ENCODE measurements at regions of chr10 and their contacts with region 1.

Region 1: DNA sequence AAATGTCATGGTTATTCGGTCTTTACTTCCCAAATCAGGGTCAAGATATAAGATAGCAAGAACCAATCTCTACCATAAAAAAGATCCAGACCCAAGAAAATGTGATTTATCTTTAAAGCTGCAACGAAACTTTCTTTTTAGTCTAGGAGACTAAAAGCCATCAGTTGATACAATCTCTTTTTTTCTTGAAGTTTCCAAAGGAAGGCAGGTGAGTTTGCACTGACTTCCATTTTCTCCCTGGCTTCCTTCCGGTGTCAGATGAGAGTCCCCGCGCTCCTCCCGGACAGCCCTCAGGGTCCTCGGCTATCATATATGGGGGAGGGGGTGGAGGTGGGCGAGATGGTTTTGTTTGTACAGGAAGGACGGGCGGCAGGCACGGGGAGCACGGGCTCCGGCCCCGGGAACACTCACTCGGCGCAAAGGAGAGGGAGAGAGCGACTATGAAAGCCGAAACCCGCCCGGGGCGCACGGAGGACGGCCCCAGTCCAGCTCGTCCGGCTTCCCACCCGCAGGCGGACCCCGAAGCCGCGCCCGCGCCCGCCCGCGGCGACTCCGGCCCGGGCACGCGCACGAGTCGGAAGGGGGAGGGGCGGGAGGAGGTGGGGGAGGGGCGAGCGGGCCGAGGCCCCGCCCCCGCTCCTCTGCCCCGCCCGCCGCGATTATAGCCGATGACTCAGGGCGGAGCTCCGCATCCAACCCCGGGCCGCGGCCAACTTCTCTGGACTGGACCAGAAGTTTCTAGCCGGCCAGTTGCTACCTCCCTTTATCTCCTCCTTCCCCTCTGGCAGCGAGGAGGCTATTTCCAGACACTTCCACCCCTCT is at the start of gene BAG3:
- DNase-seq: peak; percentile 80 to 88
- ATAC-seq: peak; percentile 79
- H3K4me3 ChIP-seq: peak within 1 kb of the TSS; percentile 88
- H3K27ac ChIP-seq: peak within 1 kb of the TSS; percentile 89 to 96
- H3K4me1 ChIP-seq: peaks cover 27% of the 10 kb centered on the region
- CTCF ChIP-seq: no peak
- EP300 ChIP-seq: no peak; a peak in 1 of 5 replicates
- POLR2A ChIP-seq: peak; percentile 66
- RAD21 ChIP-seq: no peak; a peak in 1 of 5 replicates
- polyA plus RNA-seq, gene BAG3: 10.7 and 18.3 TPM in 2 replicates

Region 2: DNA sequence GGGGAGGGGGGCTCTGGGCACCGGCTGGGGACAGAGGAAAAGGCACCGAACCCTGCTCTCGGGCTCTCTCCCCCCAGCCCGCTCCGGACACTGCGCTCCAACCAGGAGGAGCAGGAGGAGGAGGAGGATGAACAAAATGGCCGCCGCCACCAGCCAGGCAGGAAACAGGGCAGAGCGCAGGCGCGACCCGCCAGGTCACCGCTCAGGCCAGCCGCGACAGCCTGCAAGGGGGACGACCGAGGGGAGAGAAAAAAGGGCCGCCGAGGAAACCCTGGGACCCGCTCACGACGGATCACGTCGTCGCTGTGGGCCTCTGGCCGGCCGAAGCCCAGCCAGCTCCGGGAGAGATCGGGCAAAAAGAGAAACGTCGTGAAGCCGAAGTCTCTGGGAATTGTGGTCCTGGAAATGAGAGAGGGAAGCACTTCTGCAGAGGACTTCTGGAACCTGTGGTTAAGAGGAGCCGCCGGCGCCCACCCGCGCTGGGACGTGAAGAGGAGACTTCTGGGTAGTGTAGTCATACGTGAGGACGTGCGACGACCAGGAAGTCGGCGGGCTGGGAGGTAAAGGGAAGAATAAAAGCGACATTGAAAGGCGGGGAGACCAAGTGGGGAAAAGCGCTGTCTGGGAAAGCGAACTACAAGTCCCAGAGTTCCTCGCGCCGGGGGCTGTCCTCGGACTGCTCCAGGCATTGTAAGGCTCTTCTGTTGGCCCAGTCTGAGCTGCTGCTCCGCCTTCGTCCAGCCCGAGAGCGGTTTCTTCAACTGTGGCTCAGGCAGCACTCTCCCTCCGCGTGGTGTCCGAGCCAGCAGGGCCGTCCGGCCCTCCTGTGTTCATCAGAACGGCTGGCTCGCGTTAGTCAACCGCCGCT is 54.1 kb before region 1 on chr10 and contains the start of gene TIAL1:
- CTCF ChIA-PET with region 1: no interaction called
- POLR2A ChIA-PET with region 1: interaction called, 17 read pairs
- DNase-seq: peak; percentile 94 to 100
- ATAC-seq: peak; percentile 94 to 95
- H3K4me3 ChIP-seq: peak within 1 kb of the TSS; percentile 97
- H3K27ac ChIP-seq: peak within 1 kb of the TSS; percentile 96 to 97
- H3K4me1 ChIP-seq: peaks cover 38% of the 10 kb centered on the region
- CTCF ChIP-seq: no peak
- EP300 ChIP-seq: no peak
- POLR2A ChIP-seq: peak; percentile 74
- RAD21 ChIP-seq: no peak
- polyA plus RNA-seq, gene TIAL1: 101 and 115 TPM in 2 replicates

Region 3: GRCh38 chr10:119680050-119680449 is 29.1 kb after region 1 on chr10:
- CTCF ChIA-PET with region 1: interaction called, 34 read pairs
- POLR2A ChIA-PET with region 1: interaction called, 11 read pairs
- DNase-seq: peak; percentile 70 to 84
- ATAC-seq: peak; percentile 45 to 66
- H3K4me3 ChIP-seq: 0 out of 3 replicates have a peak overlapping the region, but pooled peaks have one; percentile 14
- H3K27ac ChIP-seq: peak overlapping the region; percentile 88 to 93
- H3K4me1 ChIP-seq: peaks cover 70% of the 10 kb centered on the region
- CTCF ChIP-seq: no peak
- EP300 ChIP-seq: no peak; a peak in 1 of 5 replicates
- POLR2A ChIP-seq: no peak
- RAD21 ChIP-seq: no peak

Measured in A549 (cell line).